Esophagus squamous epithelium (tissue), 5 donors: ENCODE measurements at regions of chr17 and their contacts with region 1.

Region 1: DNA sequence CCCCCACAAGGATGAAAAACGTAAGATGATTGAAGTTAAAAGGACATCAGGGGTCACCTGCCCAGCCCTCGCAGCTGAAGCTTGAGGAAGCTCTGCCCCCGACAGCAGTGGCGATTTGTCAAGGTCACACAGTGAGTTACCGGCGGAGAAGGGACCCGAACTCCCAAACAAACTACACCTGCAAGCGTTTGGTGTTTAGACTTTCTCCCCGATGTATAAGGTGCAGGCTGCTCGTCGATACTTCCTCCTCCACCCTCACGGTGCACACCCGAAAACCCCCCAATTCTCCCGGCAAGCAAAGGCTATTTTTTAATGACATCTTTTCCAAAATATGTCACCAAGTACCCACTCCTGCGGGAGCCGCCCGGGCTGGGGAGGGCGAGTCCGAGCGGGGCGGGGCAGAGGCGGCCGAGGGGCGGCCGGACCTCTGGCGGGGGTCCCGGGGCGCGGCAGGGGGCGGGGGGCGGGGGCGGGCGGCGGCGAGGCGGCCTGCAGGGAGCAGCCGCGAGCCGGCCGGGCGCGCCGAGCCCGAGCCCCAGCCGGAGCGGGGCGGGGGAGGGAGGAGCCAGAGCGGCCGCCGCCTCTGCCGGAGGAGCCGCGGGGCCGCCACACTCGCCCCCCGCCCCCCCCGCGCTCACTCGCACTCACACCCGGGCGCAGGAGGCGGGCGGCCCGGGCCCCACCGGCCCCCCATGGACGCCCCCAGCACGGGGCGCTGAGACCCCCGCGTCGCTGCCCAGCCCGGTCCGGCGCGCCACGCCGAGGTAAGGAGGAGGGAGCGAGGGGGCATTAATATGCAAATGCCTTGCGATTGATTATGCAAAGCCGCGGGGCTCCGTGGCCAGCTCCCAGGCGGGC is at the start of gene THRA:
- DNase-seq: no peak
- H3K4me3 ChIP-seq: peak within 1 kb of the TSS; percentile 88 to 100 (median 100)
- H3K27ac ChIP-seq: peak within 1 kb of the TSS; percentile 93 to 98 (median 95)
- H3K4me1 ChIP-seq: peaks cover 29 to 92% (median 51%) of the 10 kb centered on the region in 3 donors
- H3K27me3 ChIP-seq: no peaks in the 10 kb centered on the region
- CTCF ChIP-seq: peak in 1 of 6 experiments; percentile 3
- POLR2A ChIP-seq: peak in 1 of 4 donors; percentile 43
- total RNA-seq, gene THRA: 4.2 to 27.1 (median 13.4) TPM

Region 2: DNA sequence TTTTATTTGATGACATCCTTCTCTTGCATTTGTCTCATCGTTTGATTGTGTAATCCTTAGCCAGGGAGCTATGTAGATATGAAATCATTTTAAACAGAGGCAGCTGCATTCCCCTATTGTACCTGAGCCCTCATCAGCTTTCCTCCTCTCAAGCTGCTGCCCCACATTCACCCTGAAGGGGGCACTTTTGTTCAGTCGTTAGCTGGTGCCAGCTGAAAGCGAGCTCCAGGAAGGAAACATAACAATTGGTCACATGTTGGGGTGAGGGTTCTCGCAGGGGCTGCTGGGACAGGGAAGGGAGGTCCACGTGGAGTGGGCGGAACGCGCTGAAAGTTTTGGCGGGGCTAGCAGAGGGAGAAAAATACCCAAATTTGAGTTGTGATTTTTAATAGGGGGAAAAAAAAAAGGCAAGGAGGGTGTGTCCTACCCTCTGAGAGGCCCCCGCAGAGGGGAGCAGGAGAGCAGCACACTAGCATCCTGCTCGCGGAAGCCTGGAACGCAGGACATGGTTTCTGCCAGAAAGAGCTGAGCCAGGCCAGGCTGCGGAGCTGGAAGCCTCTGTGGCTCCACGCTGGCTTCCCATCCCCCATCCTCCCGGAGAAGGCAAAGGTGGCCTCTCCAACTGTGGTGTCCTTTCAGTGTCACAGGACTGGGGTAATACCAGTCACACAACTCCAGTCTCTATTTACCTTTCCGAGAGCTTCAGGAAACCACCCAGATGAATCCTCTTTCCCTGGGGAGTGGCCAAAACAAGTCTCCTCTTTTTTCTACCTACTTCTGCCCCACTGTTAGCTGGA is 50.8 kb after region 1 on chr17:
- intact Hi-C with region 1: loop called (anchors 10 kb)
- DNase-seq: peak; percentile 77
- H3K4me3 ChIP-seq: peak overlapping the region; percentile 28 to 67 (median 48)
- H3K27ac ChIP-seq: peak overlapping the region; percentile 86 to 100 (median 96)
- H3K4me1 ChIP-seq: peaks cover 45 to 68% (median 58%) of the 10 kb centered on the region in 3 donors
- H3K27me3 ChIP-seq: no peaks in the 10 kb centered on the region
- CTCF ChIP-seq: peak; percentile 74 to 98 (median 96)
- POLR2A ChIP-seq: peak in 1 of 4 donors; percentile 20